GM10248 (cell line): ENCODE measurements at regions of chr4 and their contacts with region 1.

Region 1: DNA sequence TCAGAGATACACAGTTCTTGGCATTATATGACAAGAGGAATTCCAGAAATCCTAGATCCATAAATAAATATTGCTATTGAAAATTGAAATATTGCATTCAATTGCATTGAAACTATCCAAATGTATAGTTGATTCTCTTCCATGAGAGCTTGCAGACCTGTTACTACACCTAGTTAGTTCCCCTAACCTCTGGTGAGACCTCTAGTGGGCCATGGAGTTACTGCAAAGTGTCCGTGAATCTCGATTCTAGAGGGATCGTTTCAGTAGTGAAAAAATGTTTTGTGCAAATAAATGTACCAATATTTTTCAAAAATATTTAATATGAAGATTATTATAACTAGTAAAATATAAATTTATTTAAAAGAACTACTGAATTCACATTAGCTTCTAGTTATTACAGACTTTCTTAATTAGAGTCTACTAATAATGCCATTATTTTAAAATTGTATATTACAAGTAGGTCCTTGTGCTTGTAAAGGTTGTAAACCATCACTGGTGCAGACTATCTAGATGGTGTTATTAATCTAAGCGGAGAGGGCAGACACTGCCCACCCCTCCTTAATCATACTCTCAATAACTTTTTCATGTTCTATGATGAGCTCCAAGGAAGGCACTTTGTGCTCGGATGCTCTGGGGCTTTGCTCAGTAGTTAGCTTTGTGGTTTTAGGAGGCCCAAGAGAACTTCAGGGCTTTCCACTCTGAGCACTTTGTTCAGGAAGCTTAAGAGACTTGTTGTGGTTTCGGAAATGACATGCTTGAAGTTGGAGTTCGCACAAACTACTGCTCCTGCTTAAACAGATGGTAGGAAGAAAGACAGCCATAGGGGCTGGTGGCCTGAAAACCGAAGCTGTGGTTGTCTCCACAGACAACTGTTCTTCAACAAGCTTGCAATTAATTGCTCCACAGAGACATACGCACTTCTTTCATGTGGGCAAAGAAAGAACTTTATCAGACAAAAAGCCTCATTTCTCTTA is 42.8 kb downstream of the IL21 start:
- DNase-seq: peak; percentile 57
- CTCF ChIP-seq: peak; percentile 86

Region 2: DNA sequence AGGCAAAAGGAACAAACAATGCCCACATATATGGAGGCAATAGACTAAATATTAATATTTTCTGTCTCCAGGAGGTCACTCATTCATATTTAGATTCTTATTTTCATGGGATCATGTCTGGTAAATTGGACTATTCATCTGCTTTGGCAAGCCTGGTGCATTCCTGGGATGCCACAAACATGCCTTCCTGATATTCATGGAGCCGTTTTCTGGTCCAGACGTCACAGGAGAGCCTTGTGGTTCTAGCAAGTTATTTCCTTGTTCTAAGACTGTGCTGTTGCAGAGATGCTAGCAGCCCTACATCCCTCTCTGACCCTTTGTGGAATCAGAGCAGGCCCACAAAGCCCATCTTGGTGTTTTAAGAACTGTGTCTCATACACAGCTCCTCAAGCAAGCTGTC is 793.1 kb before region 1 on chr4:
- CTCF ChIA-PET with region 1: no interaction called
- POLR2A ChIA-PET with region 1: no interaction called
- DNase-seq: no peak
- CTCF ChIP-seq: no peak

Region 3: DNA sequence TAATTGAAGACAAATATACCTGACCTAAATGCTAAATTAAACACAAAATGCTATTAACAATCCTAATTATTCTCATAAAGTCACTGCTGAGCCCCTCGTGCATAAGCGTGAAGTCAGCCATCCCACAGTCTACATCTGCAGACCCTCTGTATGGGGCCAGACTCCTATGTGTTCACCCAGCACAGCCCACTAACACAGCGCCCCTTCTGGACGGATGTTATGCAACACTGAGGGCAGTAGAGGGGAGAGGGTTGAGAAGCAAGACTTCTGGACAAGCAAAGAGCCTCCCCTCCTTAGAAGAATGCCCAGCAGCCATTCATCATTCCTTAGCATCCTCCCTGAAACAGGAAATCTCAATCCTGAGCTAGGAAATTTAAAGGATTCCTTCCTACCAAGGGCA is 634.2 kb before region 1 on chr4:
- CTCF ChIA-PET with region 1: interaction called, 40 read pairs
- POLR2A ChIA-PET with region 1: no interaction called
- DNase-seq: peak; percentile 24
- CTCF ChIP-seq: peak; percentile 38

Region 4: DNA sequence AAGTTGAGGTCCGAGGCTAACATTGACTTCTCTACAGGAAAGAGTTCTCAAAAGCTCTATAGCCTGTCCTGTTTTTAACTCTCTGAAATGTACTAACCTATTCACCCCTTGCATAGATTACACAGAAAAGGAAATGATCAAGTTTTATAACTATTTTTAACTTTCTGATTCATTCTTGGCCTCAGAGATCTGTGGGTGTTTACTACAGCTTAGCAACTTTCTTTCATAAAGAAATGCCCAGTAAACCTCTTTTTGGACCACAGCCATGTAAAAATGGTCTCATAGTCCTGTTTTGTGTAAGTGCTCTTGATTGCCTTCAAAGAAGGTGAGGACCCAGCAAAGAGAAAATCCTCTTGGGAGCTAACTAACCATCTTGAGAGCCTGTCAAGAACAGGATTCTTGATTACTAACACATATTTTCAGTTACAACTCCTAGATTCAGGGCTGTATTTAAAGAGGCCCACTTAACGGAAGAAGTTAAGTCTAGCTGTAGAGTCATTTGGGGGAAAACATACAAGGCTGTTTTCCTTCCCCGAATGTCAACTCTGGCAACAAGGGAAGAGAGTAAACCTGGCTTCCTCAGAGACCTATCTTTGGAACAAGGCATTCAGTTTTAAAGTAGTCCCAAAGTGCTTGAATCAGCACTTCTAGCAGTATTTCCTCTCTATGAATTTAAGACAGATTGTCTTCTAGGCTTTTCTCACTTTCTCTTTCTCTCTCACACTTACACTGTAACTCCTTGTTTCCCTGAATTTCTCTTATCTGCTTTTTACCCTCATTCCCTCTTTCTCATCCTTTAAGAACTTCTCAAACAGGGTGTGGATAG is 35.5 kb before region 1 on chr4:
- CTCF ChIA-PET with region 1: interaction called, 13 read pairs
- POLR2A ChIA-PET with region 1: no interaction called
- DNase-seq: peak; percentile 35
- CTCF ChIP-seq: no peak

Region 5: GRCh38 chr4:122555216-122555615 is 22.9 kb before region 1 on chr4:
- CTCF ChIA-PET with region 1: interaction called, 12 read pairs
- POLR2A ChIA-PET with region 1: no interaction called
- DNase-seq: no peak
- CTCF ChIP-seq: no peak

Region 6: GRCh38 chr4:122588453-122589238 is 10.6 kb after region 1 on chr4:
- CTCF ChIA-PET with region 1: interaction called, 32 read pairs
- POLR2A ChIA-PET with region 1: no interaction called
- DNase-seq: no peak
- CTCF ChIP-seq: no peak

Region 7: DNA sequence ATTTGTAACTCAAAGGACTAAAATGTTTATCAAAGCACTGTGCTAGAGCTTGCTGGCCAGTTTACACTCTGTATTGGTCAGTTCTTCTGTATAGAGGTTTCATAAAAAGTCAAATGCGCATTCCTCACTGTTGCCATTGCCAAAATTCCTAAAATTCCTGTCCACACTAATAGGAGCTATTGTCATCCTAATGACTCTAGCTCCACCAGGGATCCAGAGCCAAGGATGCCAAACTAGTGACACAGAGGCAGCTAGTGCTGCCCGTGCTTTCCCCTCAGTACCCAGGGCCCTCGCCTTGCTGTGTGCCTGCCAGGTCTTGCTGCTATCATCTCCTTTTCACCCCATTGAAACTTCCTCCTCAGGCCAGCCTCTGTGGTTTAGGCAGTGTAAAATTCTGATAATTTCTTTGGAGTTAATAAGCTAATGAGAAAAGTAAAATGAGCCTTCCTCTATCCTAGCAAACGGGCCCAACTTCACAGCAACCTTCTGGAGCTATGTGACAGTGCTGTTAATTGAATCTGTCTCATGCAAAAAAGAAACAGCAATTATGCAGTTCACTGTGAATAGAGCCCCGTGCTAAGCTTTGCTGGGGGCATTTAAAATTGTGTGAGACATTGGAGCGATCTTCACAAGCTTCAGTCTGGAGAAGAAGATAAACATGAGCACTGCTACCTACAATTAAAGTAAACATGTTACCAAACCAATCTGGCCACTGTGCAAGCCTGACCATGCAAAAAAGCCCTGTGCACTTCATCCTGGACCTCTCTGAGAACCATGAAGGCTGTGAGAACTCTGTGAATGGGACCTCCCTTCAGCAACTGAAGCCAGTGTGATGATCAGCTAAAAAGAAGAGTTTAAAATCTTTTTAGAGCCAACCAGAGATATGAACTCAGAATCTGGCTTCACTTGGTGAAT is 205.5 kb after region 1 on chr4:
- CTCF ChIA-PET with region 1: no interaction called
- POLR2A ChIA-PET with region 1: no interaction called
- DNase-seq: no peak
- CTCF ChIP-seq: no peak